Activated CD4-positive, alpha-beta T cell treated with anti-CD3 and anti-CD28 coated beads, Interleukin-2, amount 10 ng/mL, durations not matched to agents 7 days and 5 days (primary cell): ENCODE measurements at regions of chr5 and their contacts with region 1.

Region 1: GRCh38 chr5:112921833-112922817 is at the start of gene REEP5:
- DNase-seq: peak; percentile 85
- H3K4me3 Mint-ChIP-seq: peak within 1 kb of the TSS; percentile 91
- H3K27ac Mint-ChIP-seq: peak within 1 kb of the TSS; percentile 98
- H3K4me1 Mint-ChIP-seq: peaks cover 71% of the 10 kb centered on the region
- H3K27me3 Mint-ChIP-seq: no peaks in the 10 kb centered on the region
- total RNA-seq, gene REEP5: 75.1 to 80.3 TPM

Region 2: DNA sequence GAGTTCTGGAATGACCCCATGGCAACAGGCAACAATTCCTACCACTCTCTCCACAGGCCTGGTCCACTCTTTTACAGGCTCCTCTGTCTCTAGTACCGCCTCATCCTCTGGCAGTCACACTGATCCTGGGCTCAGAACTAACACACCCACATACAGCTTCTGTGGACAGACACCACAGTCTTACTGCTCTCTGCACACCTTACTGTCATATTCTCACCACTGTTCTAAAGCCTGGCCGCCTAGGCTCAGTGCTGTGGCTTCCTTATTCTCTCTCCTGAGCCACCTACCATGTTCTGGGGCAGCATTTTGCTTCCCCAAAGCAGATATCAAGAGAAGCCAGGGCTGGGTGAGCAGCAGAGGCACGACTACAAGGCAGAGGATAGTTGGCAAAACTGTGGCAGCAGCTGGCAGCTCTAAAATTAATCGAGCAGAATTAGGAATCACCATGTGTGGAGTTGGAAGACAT is 14.9 kb before region 1 on chr5:
- CTCF ChIA-PET with region 1: interaction called, 14 read pairs
- POLR2A ChIA-PET with region 1: no interaction called
- DNase-seq: no peak
- H3K4me3 Mint-ChIP-seq: no peak overlapping the region
- H3K27ac Mint-ChIP-seq: no peak overlapping the region
- H3K4me1 Mint-ChIP-seq: peaks cover 17% of the 10 kb centered on the region
- H3K27me3 Mint-ChIP-seq: no peaks in the 10 kb centered on the region

Region 3: GRCh38 chr5:112995764-112996618 is 73.9 kb after region 1 on chr5:
- CTCF ChIA-PET with region 1: no interaction called
- POLR2A ChIA-PET with region 1: no interaction called
- DNase-seq: peak; percentile 81
- H3K4me3 Mint-ChIP-seq: no peak overlapping the region
- H3K27ac Mint-ChIP-seq: no peak overlapping the region
- H3K4me1 Mint-ChIP-seq: peaks cover 20% of the 10 kb centered on the region
- H3K27me3 Mint-ChIP-seq: no peaks in the 10 kb centered on the region

Region 4: DNA sequence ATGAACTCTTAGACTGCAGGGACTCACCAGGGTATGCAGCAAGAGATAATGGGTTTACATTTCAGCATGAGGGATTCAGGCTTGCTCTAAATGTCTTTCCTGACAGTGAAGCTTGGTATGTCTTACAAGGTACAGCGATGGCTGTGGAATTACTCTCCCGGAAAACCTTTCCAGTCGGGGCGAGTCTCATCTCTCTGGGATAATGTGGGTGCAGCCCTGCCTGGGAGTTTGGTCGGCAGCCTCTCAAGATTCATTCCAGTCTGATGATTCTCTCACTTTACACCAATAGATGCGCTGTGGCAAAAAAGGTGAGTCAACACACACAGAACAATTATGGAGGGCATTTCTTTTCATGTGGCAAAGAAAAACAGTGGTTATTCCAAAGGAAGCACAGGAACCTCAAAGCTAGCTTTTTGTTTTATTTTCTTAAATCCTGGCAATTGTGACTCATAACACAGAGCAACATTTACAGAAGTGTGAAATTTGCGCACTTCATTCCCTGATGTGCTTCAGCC is 244.8 kb after region 1 on chr5:
- CTCF ChIA-PET with region 1: no interaction called
- POLR2A ChIA-PET with region 1: no interaction called
- DNase-seq: no peak
- H3K4me3 Mint-ChIP-seq: no peak overlapping the region
- H3K27ac Mint-ChIP-seq: no peak overlapping the region
- H3K4me1 Mint-ChIP-seq: no peaks in the 10 kb centered on the region
- H3K27me3 Mint-ChIP-seq: peaks cover 16% of the 10 kb centered on the region